Activated CD8-positive, alpha-beta T cell treated with anti-CD3 and anti-CD28 coated beads, Interleukin-2, amount 10 ng/mL, durations not matched to agents 7 days and 5 days (primary cell): ENCODE measurements at regions of chr5 and their contacts with region 1.

Region 1: GRCh38 chr5:14644623-14645237 is 19.8 kb upstream of the OTULIN start:
- DNase-seq: no peak
- ATAC-seq: no peak
- H3K4me3 Mint-ChIP-seq: no peak overlapping the region
- H3K27ac Mint-ChIP-seq: no peak overlapping the region
- H3K4me1 Mint-ChIP-seq: peaks cover 14% of the 10 kb centered on the region
- H3K27me3 Mint-ChIP-seq: peaks cover 24% of the 10 kb centered on the region

Region 2: GRCh38 chr5:14364576-14365472 is 279.9 kb before region 1 on chr5:
- CTCF ChIA-PET with region 1: interaction called, 304 read pairs
- POLR2A ChIA-PET with region 1: interaction called, 12 read pairs
- DNase-seq: no peak
- ATAC-seq: peak; percentile 25
- H3K4me3 Mint-ChIP-seq: peak overlapping the region; percentile 56
- H3K27ac Mint-ChIP-seq: peak overlapping the region; percentile 36
- H3K4me1 Mint-ChIP-seq: peaks cover 61% of the 10 kb centered on the region
- H3K27me3 Mint-ChIP-seq: peaks cover 1% of the 10 kb centered on the region

Region 3: GRCh38 chr5:14415024-14415697 is 229.6 kb before region 1 on chr5:
- CTCF ChIA-PET with region 1: interaction called, 24 read pairs
- POLR2A ChIA-PET with region 1: interaction called, 3 read pairs
- DNase-seq: peak; percentile 60
- ATAC-seq: peak; percentile 59
- H3K4me3 Mint-ChIP-seq: peak overlapping the region; percentile 71
- H3K27ac Mint-ChIP-seq: peak overlapping the region; percentile 94
- H3K4me1 Mint-ChIP-seq: peaks cover 63% of the 10 kb centered on the region
- H3K27me3 Mint-ChIP-seq: no peaks in the 10 kb centered on the region

Region 4: GRCh38 chr5:14588758-14589543 is 55.8 kb before region 1 on chr5:
- CTCF ChIA-PET with region 1: interaction called, 34 read pairs
- POLR2A ChIA-PET with region 1: interaction called, 5 read pairs
- DNase-seq: no peak
- ATAC-seq: no peak
- H3K4me3 Mint-ChIP-seq: no peak overlapping the region
- H3K27ac Mint-ChIP-seq: peak overlapping the region; percentile 37
- H3K4me1 Mint-ChIP-seq: peaks cover 94% of the 10 kb centered on the region
- H3K27me3 Mint-ChIP-seq: no peaks in the 10 kb centered on the region

Region 5: GRCh38 chr5:14615344-14615743 is 29.4 kb before region 1 on chr5:
- CTCF ChIA-PET with region 1: interaction called, 13 read pairs
- POLR2A ChIA-PET with region 1: no interaction called
- DNase-seq: no peak
- ATAC-seq: no peak
- H3K4me3 Mint-ChIP-seq: no peak overlapping the region
- H3K27ac Mint-ChIP-seq: peak overlapping the region; percentile 11
- H3K4me1 Mint-ChIP-seq: peaks cover 7% of the 10 kb centered on the region
- H3K27me3 Mint-ChIP-seq: no peaks in the 10 kb centered on the region

Region 6: GRCh38 chr5:14676320-14676719 is 31.6 kb after region 1 on chr5:
- CTCF ChIA-PET with region 1: interaction called, 12 read pairs
- POLR2A ChIA-PET with region 1: no interaction called
- DNase-seq: peak; percentile 56
- ATAC-seq: peak; percentile 80
- H3K4me3 Mint-ChIP-seq: peak overlapping the region; percentile 63
- H3K27ac Mint-ChIP-seq: peak overlapping the region; percentile 83
- H3K4me1 Mint-ChIP-seq: peaks cover 71% of the 10 kb centered on the region
- H3K27me3 Mint-ChIP-seq: no peaks in the 10 kb centered on the region